SK-N-SH (cell line): ENCODE measurements at regions of chr14 and their contacts with region 1.

Region 1: GRCh38 chr14:103391048-103391447 is 5.8 kb downstream of the MARK3 start:
- DNase-seq: peak; percentile 61
- H3K4me3 ChIP-seq: peak overlapping the region in 1 of 2 experiments; percentile 23; a peak in 1 of 4 replicates
- H3K27ac ChIP-seq: peak overlapping the region; percentile 17 to 30; a peak in 2 of 4 replicates
- H3K4me1 ChIP-seq: peaks cover 2 to 29% of the 10 kb centered on the region in 2 experiments; a peak in 2 of 4 replicates
- H3K27me3 ChIP-seq: no peaks in the 10 kb centered on the region
- CTCF ChIP-seq: peak; percentile 97
- EP300 ChIP-seq: no peak
- RAD21 ChIP-seq: peak; percentile 58

Region 2: GRCh38 chr14:103315351-103315911 is 75.6 kb before region 1 on chr14:
- CTCF ChIA-PET with region 1: no interaction called
- POLR2A ChIA-PET with region 1: no interaction called
- DNase-seq: no peak
- H3K4me3 ChIP-seq: no peak overlapping the region
- H3K27ac ChIP-seq: no peak overlapping the region
- H3K4me1 ChIP-seq: no peaks in the 10 kb centered on the region
- H3K27me3 ChIP-seq: no peaks in the 10 kb centered on the region
- CTCF ChIP-seq: no peak
- EP300 ChIP-seq: no peak
- RAD21 ChIP-seq: no peak

Region 3: GRCh38 chr14:103333754-103334643 is 57.0 kb before region 1 on chr14 and contains the start of gene EIF5:
- CTCF ChIA-PET with region 1: interaction called, 10 read pairs
- POLR2A ChIA-PET with region 1: interaction called, 3 read pairs
- DNase-seq: peak; percentile 99
- H3K4me3 ChIP-seq: peak within 1 kb of the TSS; percentile 83 to 94
- H3K27ac ChIP-seq: peak within 1 kb of the TSS; percentile 97 to 98
- H3K4me1 ChIP-seq: peaks cover 12 to 15% of the 10 kb centered on the region in 2 experiments
- H3K27me3 ChIP-seq: no peaks in the 10 kb centered on the region
- CTCF ChIP-seq: 0 out of 2 replicates have a peak, but pooled peaks have one; percentile 13
- EP300 ChIP-seq: peak in 1 of 2 experiments; percentile 48; a peak in 1 of 4 replicates
- RAD21 ChIP-seq: no peak
- polyA plus RNA-seq, gene EIF5: 120 and 127 TPM in 2 replicates

Region 4: GRCh38 chr14:103346286-103346685 is 44.8 kb before region 1 on chr14:
- CTCF ChIA-PET with region 1: interaction called, 19 read pairs
- POLR2A ChIA-PET with region 1: no interaction called
- DNase-seq: no peak
- H3K4me3 ChIP-seq: no peak overlapping the region
- H3K27ac ChIP-seq: no peak overlapping the region
- H3K4me1 ChIP-seq: no peaks in the 10 kb centered on the region
- H3K27me3 ChIP-seq: no peaks in the 10 kb centered on the region
- CTCF ChIP-seq: no peak
- EP300 ChIP-seq: no peak
- RAD21 ChIP-seq: no peak

Region 5: DNA sequence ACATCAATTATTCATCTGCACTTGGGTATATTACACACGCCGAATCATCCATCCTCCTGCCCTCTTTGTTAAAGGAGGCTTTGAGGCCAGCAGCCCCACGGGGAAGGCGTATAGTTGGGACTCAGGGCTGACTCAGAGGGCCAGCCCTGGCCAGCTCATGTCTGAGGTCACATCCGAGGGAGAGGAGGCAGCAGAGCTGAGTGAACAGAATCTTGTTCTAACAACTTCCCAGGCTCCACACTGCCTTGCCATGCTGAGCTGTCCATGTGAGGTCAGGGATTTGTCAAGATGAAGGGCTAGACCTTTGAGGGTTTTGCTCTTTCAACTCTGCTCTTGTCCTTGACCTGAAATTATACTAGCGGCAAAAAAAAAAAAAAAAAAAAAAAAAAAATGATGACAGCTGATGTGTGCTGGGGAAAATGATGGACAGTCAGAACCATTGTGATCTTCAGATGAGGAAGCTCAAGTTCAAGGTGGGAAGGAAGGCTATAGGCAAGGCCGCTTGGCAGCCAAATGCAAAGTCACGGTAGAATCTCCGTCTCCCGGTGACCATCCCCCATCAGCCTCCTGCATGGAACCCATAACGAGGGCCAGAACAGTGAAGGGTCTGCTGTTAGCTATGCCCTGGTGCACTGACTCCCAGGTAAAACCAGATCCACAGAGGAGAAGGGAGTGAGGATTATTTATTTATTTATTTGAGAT is 18.3 kb before region 1 on chr14:
- CTCF ChIA-PET with region 1: interaction called, 48 read pairs
- POLR2A ChIA-PET with region 1: no interaction called
- DNase-seq: no peak
- H3K4me3 ChIP-seq: no peak overlapping the region
- H3K27ac ChIP-seq: peak overlapping the region in 1 of 2 experiments; percentile 51; a peak in 2 of 4 replicates
- H3K4me1 ChIP-seq: peaks cover 0 to 6% of the 10 kb centered on the region in 2 experiments; a peak in 2 of 4 replicates
- H3K27me3 ChIP-seq: no peaks in the 10 kb centered on the region
- CTCF ChIP-seq: no peak
- EP300 ChIP-seq: peak in 1 of 2 experiments; percentile 61; a peak in 1 of 4 replicates
- RAD21 ChIP-seq: no peak

Region 6: GRCh38 chr14:103401223-103402214 is 10.5 kb after region 1 on chr14:
- CTCF ChIA-PET with region 1: interaction called, 25 read pairs
- POLR2A ChIA-PET with region 1: no interaction called
- DNase-seq: no peak
- H3K4me3 ChIP-seq: no peak overlapping the region; a peak in 1 of 4 replicates
- H3K27ac ChIP-seq: peak overlapping the region; percentile 45 to 87
- H3K4me1 ChIP-seq: peaks cover 8 to 51% of the 10 kb centered on the region in 2 experiments
- H3K27me3 ChIP-seq: no peaks in the 10 kb centered on the region
- CTCF ChIP-seq: no peak
- EP300 ChIP-seq: no peak
- RAD21 ChIP-seq: no peak

Region 7: GRCh38 chr14:103408491-103409155 is 17.6 kb after region 1 on chr14:
- CTCF ChIA-PET with region 1: interaction called, 25 read pairs
- POLR2A ChIA-PET with region 1: no interaction called
- DNase-seq: no peak
- H3K4me3 ChIP-seq: no peak overlapping the region
- H3K27ac ChIP-seq: no peak overlapping the region
- H3K4me1 ChIP-seq: peaks cover 4 to 9% of the 10 kb centered on the region in 2 experiments; a peak in 3 of 4 replicates
- H3K27me3 ChIP-seq: no peaks in the 10 kb centered on the region
- CTCF ChIP-seq: no peak
- EP300 ChIP-seq: no peak
- RAD21 ChIP-seq: no peak

Region 8: DNA sequence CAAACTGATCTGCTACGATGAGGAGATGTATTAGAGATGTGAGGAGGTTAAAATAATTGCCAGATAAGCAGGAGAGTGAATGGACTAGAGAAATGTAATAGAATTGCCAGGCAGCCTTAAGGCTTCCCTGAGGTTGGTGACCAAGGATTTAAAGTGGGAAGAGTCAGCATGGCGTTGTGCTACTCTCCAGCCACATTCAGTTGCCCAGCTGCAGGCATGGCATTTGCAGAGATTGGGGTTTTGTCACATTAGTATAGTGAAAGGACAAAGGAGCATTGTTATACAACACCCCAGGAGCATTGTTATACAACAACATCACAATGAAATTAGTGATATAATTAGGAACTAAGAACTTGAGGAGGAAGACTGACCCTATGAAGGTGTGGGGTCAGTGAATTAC is 25.9 kb after region 1 on chr14:
- CTCF ChIA-PET with region 1: interaction called, 13 read pairs
- POLR2A ChIA-PET with region 1: no interaction called
- DNase-seq: no peak
- H3K4me3 ChIP-seq: no peak overlapping the region
- H3K27ac ChIP-seq: peak overlapping the region; percentile 61 to 89; a peak in 3 of 4 replicates
- H3K4me1 ChIP-seq: peaks cover 2 to 29% of the 10 kb centered on the region in 2 experiments; a peak in 3 of 4 replicates
- H3K27me3 ChIP-seq: no peaks in the 10 kb centered on the region
- CTCF ChIP-seq: no peak
- EP300 ChIP-seq: no peak
- RAD21 ChIP-seq: no peak

Region 9: DNA sequence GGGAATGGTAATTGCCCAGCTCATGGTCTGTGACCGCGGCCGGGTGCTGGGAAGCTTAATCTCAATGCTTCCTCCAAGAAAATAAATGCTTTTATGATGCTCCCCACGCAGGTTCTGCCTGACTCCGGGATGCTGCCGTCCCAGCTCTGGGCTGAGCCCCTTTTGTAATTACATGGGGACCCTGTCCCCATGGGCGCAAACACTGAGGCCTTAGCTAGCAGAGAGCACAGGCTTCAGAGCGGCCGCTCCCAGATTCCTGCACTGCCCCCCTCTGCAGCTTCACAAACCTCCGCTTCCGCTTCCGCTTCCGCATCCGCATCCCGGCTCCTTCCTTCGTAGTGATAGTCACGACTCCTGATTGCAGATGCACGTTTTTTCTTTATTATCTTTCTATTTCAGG is 876.8 kb after region 1 on chr14:
- CTCF ChIA-PET with region 1: no interaction called
- POLR2A ChIA-PET with region 1: no interaction called
- DNase-seq: no peak
- H3K4me3 ChIP-seq: no peak overlapping the region
- H3K27ac ChIP-seq: no peak overlapping the region
- H3K4me1 ChIP-seq: no peaks in the 10 kb centered on the region; a peak in 1 of 4 replicates
- H3K27me3 ChIP-seq: no peaks in the 10 kb centered on the region
- CTCF ChIP-seq: no peak
- EP300 ChIP-seq: no peak
- RAD21 ChIP-seq: no peak